ENCODE measurements at regions of chr1 and their contacts with region 1.

Region 1: DNA sequence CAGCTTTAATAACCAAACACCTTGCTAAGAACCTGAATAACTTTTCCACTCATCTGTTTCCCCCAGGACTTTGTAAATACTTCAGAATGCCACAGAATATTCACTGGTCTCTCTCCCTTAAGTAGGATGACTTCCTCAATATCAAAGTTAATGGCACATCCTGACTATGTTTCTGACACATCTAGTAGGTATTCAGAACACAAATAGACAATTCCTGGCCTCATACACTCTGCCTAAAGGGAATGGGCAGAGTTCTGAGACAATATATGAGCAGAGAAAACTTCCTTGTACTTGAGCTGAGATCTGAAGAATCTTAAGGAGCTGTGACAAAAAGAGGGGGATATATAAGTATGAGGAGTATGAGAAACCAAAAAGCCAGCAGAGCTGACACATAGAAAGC is 34.8 kb downstream of the ANKRD13C start:
- DNase-seq: no peak
- H3K4me3 Mint-ChIP-seq: no peak overlapping the region
- H3K27ac Mint-ChIP-seq: peak overlapping the region; percentile 16
- H3K4me1 Mint-ChIP-seq: peaks cover 25% of the 10 kb centered on the region
- H3K27me3 Mint-ChIP-seq: no peaks in the 10 kb centered on the region
- CTCF ChIP-seq: no peak

Region 2: DNA sequence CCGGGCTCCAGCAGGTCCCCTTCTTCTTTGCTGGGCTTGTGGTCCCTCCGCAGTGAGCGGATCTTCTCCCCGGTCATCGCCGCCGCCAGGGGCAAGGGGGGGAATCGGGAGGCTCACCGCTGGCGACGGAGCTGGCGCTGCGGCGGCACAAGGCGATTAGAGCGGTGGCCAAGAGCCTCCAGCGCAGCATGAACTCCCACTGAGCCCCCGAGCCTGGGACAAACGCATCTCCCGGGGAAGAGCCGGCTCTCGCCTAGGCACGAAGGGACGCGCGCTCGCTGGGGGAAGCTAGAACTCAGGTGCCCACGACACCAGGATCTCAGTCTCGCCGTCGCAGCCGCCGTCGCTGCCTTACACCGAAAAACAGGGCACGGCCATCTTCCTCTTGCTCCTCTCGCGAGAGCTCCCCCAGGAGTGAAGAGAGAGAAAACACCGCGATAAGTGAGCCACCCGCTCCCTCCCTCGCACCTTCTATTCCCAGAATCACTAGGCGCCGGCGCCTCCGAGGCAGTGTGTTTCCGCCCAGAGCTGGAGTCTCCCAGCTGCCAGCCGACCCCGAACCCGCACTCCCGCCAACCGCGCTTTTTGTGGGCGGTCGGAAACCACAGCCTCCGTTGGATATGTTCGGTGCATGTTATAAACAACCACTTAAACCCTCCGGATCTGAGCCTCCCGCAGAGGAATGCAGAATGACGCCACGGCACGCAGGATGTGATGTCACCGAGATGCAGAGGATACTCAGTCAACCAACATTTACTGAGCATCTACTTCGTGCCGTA is 34.8 kb after region 1 on chr1 and contains the start of gene ANKRD13C:
- CTCF ChIA-PET with region 1: no interaction called
- intact Hi-C with region 1: loop called (anchors 5 kb)
- DNase-seq: peak; percentile 92
- H3K4me3 Mint-ChIP-seq: peak within 1 kb of the TSS; percentile 99
- H3K27ac Mint-ChIP-seq: peak within 1 kb of the TSS; percentile 99
- H3K4me1 Mint-ChIP-seq: peaks cover 20% of the 10 kb centered on the region
- H3K27me3 Mint-ChIP-seq: no peaks in the 10 kb centered on the region
- CTCF ChIP-seq: no peak
- total RNA-seq, gene ANKRD13C: 24.6 and 25.2 TPM in 2 replicates

Region 3: DNA sequence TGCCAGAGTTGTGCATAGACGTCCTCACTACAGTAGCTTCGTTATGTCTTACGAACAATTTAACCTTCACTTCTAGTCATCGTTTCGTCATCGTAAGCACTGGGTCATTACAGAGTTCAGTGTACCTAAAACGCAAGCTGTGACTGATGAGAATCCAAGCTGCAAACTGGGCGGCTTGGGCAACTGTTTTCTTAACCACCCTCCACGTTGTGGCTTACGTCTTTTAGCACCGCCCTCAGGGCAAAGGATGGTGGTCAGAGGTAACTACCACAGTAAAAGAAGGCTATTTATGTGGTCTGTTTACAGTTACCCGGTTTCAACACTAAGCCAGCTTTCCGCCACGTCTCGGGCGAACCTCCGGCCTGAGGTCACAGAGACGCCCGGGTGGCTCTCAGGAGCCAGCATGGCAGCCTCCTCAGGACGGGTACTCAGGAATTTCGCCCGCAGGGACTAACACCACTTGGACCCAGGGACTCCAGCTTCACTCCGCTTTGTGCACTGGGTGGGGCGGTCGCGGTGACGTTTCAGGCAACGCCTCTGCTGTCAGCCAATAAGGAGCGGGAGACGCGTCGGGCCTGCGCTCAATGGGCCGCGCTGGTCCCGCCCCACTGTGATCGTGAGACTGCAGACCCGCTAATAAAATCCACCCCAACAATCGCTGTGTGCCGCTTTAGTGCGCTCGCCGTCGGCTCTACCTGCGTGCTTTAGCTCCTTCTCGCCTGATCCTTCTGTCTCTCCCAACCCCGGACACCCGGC is 91.0 kb after region 1 on chr1 and contains the start of gene CTH:
- CTCF ChIA-PET with region 1: no interaction called
- intact Hi-C with region 1: loop called (anchors 5 kb)
- DNase-seq: peak; percentile 97
- H3K4me3 Mint-ChIP-seq: peak within 1 kb of the TSS; percentile 89
- H3K27ac Mint-ChIP-seq: peak within 1 kb of the TSS; percentile 97
- H3K4me1 Mint-ChIP-seq: no peaks in the 10 kb centered on the region
- H3K27me3 Mint-ChIP-seq: no peaks in the 10 kb centered on the region
- CTCF ChIP-seq: no peak
- total RNA-seq, gene CTH: 15.5 and 15.9 TPM in 2 replicates

Region 4: DNA sequence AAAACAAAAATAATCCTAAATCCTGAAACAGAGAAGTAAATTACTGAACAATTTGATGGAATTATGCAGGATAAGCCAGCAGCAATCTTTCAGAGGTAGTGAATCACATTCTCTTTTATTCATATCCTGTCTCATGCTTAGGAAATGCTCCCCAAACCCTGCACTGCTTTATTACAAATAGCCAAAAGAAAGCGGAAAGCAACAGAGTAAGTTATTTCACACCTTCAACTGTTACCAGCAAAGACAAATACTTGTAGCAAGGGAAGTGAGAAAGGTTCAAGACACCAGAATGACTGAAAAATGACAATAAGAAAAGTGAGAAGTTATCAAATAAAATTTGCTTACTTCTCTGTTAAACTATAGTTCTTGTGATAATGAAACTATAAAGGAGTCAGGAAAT is 754.9 kb after region 1 on chr1:
- CTCF ChIA-PET with region 1: no interaction called
- intact Hi-C with region 1: loop called (anchors 10 kb)
- DNase-seq: no peak
- H3K4me3 Mint-ChIP-seq: no peak overlapping the region
- H3K27ac Mint-ChIP-seq: no peak overlapping the region
- H3K4me1 Mint-ChIP-seq: peaks cover 9% of the 10 kb centered on the region
- H3K27me3 Mint-ChIP-seq: no peaks in the 10 kb centered on the region
- CTCF ChIP-seq: no peak